ENCODE measurements at regions of chr4 and their contacts with region 1.

Region 1: GRCh38 chr4:22389240-22389870 is 126.5 kb downstream of the ADGRA3 start:
- DNase-seq: peak; percentile 72
- H3K4me3 Mint-ChIP-seq: no peak overlapping the region
- H3K27ac Mint-ChIP-seq: no peak overlapping the region
- H3K4me1 Mint-ChIP-seq: peaks cover 11% of the 10 kb centered on the region
- H3K27me3 Mint-ChIP-seq: no peaks in the 10 kb centered on the region

Region 2: GRCh38 chr4:21888195-21888976 is 501.0 kb before region 1 on chr4:
- CTCF ChIA-PET with region 1: no interaction called
- intact Hi-C with region 1: loop called (anchors 2 kb)
- DNase-seq: no peak
- H3K4me3 Mint-ChIP-seq: no peak overlapping the region
- H3K27ac Mint-ChIP-seq: peak overlapping the region; percentile 51
- H3K4me1 Mint-ChIP-seq: peaks cover 7% of the 10 kb centered on the region
- H3K27me3 Mint-ChIP-seq: peaks cover 2% of the 10 kb centered on the region

Region 3: DNA sequence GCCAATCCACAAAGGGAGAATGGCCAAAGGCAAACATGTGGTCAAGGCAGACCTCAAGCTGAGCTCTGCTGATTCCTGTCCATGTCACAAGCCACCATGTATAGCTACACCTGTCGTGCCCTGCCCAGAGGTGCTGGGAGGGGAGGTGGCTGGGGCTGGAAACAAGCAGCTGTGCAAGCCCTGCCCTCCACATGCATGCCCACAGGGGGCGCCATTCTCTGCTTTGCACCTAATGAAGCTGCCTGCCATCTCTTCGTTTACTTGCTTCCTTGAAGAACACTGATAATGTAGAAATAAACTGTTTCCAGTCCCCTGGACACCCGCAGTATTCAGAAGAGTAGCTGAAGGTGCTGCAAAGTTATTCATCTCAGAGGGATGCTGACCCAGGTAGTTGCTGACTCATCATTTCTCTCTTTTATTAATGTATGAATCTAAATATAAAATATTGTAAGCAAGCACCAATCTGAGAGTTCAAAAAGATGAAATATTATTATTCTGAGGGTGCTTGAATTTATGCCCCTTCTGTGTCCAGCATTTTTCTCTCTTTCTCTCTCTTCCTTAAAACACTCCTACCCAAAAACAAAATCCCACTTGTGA is 152.1 kb before region 1 on chr4:
- CTCF ChIA-PET with region 1: interaction called, 8 read pairs
- intact Hi-C with region 1: loop called (anchors 1 kb)
- DNase-seq: peak; percentile 70
- H3K4me3 Mint-ChIP-seq: no peak overlapping the region
- H3K27ac Mint-ChIP-seq: no peak overlapping the region
- H3K4me1 Mint-ChIP-seq: no peaks in the 10 kb centered on the region
- H3K27me3 Mint-ChIP-seq: peaks cover 4% of the 10 kb centered on the region

Region 4: DNA sequence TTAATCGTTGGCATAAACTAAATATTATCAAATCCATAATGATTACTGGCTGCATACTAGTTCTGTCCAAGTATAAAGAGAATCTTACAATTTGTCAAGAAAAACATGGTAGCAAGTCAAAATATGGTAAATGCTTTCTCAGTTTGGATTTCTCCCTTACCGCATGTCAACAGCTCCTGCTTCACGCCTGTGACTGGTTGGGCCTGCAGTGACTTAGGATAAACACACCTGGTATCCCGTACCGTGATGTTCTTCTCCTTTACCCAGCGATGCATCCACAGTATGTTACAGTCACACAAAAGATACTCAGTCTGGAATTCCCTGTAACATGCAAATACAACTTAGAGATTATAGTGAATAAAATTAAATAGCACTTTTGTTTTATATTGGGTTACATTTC is 55.5 kb after region 1 on chr4:
- CTCF ChIA-PET with region 1: interaction called, 3 read pairs
- intact Hi-C with region 1: loop called (anchors 1 kb)
- DNase-seq: peak; percentile 9
- H3K4me3 Mint-ChIP-seq: peak overlapping the region; percentile 10
- H3K27ac Mint-ChIP-seq: peak overlapping the region; percentile 93
- H3K4me1 Mint-ChIP-seq: peaks cover 40% of the 10 kb centered on the region
- H3K27me3 Mint-ChIP-seq: no peaks in the 10 kb centered on the region

Region 5: GRCh38 chr4:22668301-22668700 is 278.9 kb after region 1 on chr4:
- CTCF ChIA-PET with region 1: interaction called, 3 read pairs
- intact Hi-C with region 1: loop called (anchors 2 kb)
- DNase-seq: no peak
- H3K4me3 Mint-ChIP-seq: no peak overlapping the region
- H3K27ac Mint-ChIP-seq: peak overlapping the region; percentile 65
- H3K4me1 Mint-ChIP-seq: peaks cover 49% of the 10 kb centered on the region
- H3K27me3 Mint-ChIP-seq: no peaks in the 10 kb centered on the region

Region 6: GRCh38 chr4:22764183-22764582 is 374.8 kb after region 1 on chr4:
- CTCF ChIA-PET with region 1: no interaction called
- intact Hi-C with region 1: no loop called
- DNase-seq: no peak
- H3K4me3 Mint-ChIP-seq: no peak overlapping the region
- H3K27ac Mint-ChIP-seq: no peak overlapping the region
- H3K4me1 Mint-ChIP-seq: peaks cover 6% of the 10 kb centered on the region
- H3K27me3 Mint-ChIP-seq: peaks cover 8% of the 10 kb centered on the region